BJ (cell line): ENCODE measurements at regions of chr10 and their contacts with region 1.

Region 1: DNA sequence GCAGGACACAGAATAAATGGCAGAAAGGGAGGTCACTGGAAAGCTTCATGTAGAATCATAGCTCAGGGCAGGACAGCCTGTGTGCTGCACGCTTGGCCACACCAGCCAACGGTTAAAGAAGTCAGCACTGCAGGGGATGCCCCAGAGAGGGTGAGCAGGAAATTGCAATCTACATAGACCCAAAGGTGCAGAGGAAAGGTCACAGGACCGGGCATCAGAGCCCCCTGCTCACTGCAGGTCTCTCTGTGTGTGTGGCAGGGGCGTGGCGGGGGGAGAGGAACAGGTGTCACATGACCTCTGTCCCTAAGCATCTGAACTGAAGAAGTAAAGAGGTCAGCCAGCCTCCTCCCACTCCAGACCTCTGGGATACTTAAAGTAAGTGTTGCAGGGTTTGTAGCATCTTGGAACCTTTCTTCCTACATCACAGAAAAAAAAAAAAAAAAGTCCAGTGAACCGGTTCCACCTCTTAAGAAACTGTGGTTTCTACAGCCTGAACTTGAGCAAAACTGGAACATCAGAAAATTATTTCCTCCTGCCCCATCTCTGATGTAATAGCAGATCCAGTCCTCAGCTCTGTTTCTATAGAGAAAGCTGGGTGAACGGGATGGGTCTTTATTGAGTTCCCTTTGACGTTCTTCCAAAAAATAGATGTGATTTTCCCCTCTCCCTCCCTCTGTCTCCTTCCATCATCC is 64.3 kb downstream of the RGS10 start:
- DNase-seq: no peak
- H3K4me3 ChIP-seq: no peak overlapping the region
- H3K27me3 ChIP-seq: peaks cover 32% of the 10 kb centered on the region
- CTCF ChIP-seq: no peak

Region 2: DNA sequence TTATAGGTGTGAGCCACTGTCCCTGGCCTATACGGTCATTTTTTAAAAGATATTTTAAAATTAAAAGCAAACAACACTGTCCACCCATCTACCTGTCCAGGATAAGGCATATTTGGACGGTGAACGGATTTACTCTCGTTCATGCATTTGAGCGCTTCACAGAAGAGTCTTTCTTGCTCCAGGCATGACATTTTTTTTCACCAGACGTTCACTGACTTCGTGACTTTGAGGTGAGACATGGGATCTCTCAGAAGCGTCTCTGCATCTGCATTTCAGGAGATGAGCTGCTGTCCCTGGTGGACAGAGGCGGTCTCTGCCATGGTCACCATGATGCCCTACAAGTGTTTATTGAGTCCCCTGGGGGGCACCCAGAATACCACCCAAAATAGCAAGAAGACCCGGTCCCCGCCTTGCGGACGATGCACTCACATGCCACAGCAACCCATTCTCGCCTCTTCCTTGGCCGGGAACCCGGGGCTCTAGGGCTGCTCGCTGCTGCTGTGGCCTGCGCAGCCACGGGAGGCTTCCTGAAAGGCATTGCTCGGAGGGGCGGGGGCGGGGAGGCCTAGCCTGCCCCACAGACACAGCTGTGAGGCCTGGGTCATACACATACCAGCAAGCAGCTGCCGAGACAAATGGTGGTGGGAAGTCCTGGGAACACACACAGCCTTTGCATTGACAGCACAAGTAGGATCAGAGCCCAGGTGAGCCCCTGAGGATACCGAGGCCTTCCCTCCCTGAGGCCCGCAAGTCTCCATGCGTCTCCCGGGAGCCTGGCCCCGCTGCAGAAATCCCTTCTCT is 20.1 kb before region 1 on chr10:
- CTCF ChIA-PET with region 1: no interaction called
- POLR2A ChIA-PET with region 1: no interaction called
- DNase-seq: no peak
- H3K4me3 ChIP-seq: no peak overlapping the region
- H3K27me3 ChIP-seq: no peaks in the 10 kb centered on the region
- CTCF ChIP-seq: no peak

Region 3: DNA sequence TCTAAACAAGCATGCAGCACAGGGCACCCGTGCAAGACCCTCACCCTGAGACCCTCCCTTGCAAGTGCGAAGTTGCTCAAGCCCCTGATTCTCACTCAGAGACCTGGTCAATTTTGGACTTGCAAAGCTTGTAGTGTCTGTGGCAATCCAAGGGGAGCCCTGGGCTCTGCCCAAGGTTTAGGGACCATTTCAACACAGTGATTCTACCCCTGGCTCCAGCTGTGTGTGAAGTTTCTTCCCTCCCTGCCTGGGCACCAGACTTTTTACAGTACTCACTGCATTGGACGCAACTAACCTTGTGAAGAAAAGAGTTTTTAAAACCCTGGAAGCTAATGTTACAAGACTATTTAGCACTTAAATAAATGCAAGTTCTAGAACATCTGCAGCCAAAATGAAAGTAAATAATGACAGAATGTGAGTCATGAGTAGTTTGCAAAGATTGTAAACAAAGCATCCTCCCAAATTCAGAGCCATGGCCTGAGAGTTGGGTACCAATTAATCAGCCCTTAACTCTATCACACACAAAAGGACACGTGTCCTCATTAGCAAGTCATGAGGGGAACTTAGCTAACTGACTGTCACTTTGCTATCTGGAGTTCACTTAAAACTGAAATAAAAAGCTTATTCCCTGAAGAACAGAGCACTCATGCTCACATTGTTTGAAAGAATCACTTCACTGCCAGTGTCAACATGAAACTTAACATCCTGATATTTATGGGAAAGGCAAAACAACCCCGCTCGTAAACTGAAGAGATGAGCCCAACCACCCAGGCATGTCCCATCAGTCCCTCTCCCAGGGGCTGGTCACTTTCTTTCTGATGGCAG is 16.2 kb after region 1 on chr10:
- CTCF ChIA-PET with region 1: interaction called, 10 read pairs
- POLR2A ChIA-PET with region 1: no interaction called
- DNase-seq: no peak
- H3K4me3 ChIP-seq: no peak overlapping the region
- H3K27me3 ChIP-seq: no peaks in the 10 kb centered on the region
- CTCF ChIP-seq: no peak

Region 4: GRCh38 chr10:119602241-119603095 is 124.2 kb after region 1 on chr10:
- CTCF ChIA-PET with region 1: no interaction called
- POLR2A ChIA-PET with region 1: no interaction called
- DNase-seq: no peak
- H3K4me3 ChIP-seq: no peak overlapping the region
- H3K27me3 ChIP-seq: no peaks in the 10 kb centered on the region
- CTCF ChIP-seq: peak; percentile 69